Spleen (tissue), 13 donors: ENCODE measurements at regions of chr9 and their contacts with region 1.

Region 1: GRCh38 chr9:136787690-136788400 is 3.3 kb upstream of the TMEM141 start:
- DNase-seq: peak; percentile 89
- H3K4me3 ChIP-seq: no peak overlapping the region
- H3K27ac ChIP-seq: no peak overlapping the region
- H3K4me1 ChIP-seq: peaks cover 13 to 50% (median 29%) of the 10 kb centered on the region in 6 donors
- H3K27me3 ChIP-seq: no peaks in the 10 kb centered on the region
- CTCF ChIP-seq: peak; percentile 65 to 87 (median 80)
- POLR2A ChIP-seq: no peak

Region 2: DNA sequence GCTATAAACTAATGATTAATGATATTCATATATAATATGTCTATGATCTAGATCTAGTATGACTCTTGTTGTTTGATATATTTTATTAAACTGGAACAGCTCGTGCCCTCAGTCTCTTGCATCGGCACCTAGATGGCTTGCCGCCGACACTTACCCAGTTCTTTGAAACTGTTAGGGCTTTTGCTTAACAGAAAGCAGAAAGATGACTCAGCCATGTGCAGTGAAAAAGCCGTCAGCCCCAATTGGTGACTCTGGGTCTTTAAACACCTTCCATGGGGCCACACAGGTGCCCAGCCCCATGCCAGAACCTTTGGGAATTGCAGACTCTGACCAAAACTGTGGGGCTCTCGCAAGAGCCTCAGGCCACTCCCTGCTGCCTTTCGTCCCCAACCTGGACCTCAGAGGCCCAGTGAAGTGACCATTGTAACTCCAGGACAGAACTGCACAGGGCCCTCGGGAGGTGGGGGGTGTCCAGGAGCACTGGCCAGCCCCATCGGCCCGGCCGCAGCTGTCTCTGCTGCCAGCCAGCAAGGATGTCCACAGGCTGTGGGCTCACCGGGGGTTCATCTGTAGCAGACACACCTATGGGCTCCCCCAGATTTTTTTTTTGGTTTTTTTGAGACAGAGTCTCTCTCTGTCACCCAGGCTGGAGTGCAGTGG is 52.9 kb before region 1 on chr9:
- intact Hi-C with region 1: no loop called
- DNase-seq: no peak
- H3K4me3 ChIP-seq: no peak overlapping the region
- H3K27ac ChIP-seq: no peak overlapping the region
- H3K4me1 ChIP-seq: peaks cover 0 to 2% (median 0%) of the 10 kb centered on the region in 6 donors
- H3K27me3 ChIP-seq: peaks cover 0 to 14% (median 0%) of the 10 kb centered on the region in 7 donors
- CTCF ChIP-seq: no peak
- POLR2A ChIP-seq: no peak

Region 3: GRCh38 chr9:137034863-137035761 is 247.3 kb after region 1 on chr9:
- intact Hi-C with region 1: loop called (anchors 5 kb)
- DNase-seq: peak; percentile 97
- H3K4me3 ChIP-seq: peak overlapping the region in 7 of 8 donors; percentile 4 to 86 (median 31)
- H3K27ac ChIP-seq: peak overlapping the region; percentile 80 to 94 (median 84)
- H3K4me1 ChIP-seq: peaks cover 37 to 72% (median 57%) of the 10 kb centered on the region in 6 donors
- H3K27me3 ChIP-seq: peaks cover 0 to 14% (median 0%) of the 10 kb centered on the region in 7 donors
- CTCF ChIP-seq: peak; percentile 85 to 97 (median 94)
- POLR2A ChIP-seq: peak in 1 of 3 donors; percentile 20

Region 4: GRCh38 chr9:137067860-137068538 is 280.2 kb after region 1 on chr9:
- intact Hi-C with region 1: loop called (anchors 10 kb)
- DNase-seq: peak; percentile 95
- H3K4me3 ChIP-seq: no peak overlapping the region
- H3K27ac ChIP-seq: no peak overlapping the region
- H3K4me1 ChIP-seq: peaks cover 9 to 72% (median 39%) of the 10 kb centered on the region in 6 donors
- H3K27me3 ChIP-seq: peaks cover 0 to 22% (median 7%) of the 10 kb centered on the region in 7 donors
- CTCF ChIP-seq: peak; percentile 72 to 94 (median 85)
- POLR2A ChIP-seq: no peak